IMR-90 (cell line): ENCODE measurements at regions of chr4 and their contacts with region 1.

Region 1: GRCh38 chr4:147096667-147097604 is 151.3 kb upstream of the TTC29 start:
- DNase-seq: peak; percentile 69
- ATAC-seq: peak; percentile 79
- H3K4me3 ChIP-seq: no peak overlapping the region
- H3K27ac ChIP-seq: no peak overlapping the region
- H3K4me1 ChIP-seq: peaks cover 5% of the 10 kb centered on the region
- H3K27me3 ChIP-seq: no peaks in the 10 kb centered on the region
- CTCF ChIP-seq: peak; percentile 74
- POLR2A ChIP-seq: no peak
- RAD21 ChIP-seq: peak; percentile 75

Region 2: GRCh38 chr4:146105464-146105863 is 991.5 kb before region 1 on chr4:
- CTCF ChIA-PET with region 1: no interaction called
- POLR2A ChIA-PET with region 1: no interaction called
- dilution Hi-C with region 1: no loop called
- in situ Hi-C with region 1: no loop called
- intact Hi-C with region 1: loop called (anchors 10 kb)
- DNase-seq: no peak
- ATAC-seq: no peak
- H3K4me3 ChIP-seq: no peak overlapping the region
- H3K27ac ChIP-seq: no peak overlapping the region
- H3K4me1 ChIP-seq: no peaks in the 10 kb centered on the region
- H3K27me3 ChIP-seq: peaks cover 2% of the 10 kb centered on the region; the same call in 1 of the 2 replicates
- CTCF ChIP-seq: no peak
- POLR2A ChIP-seq: no peak
- RAD21 ChIP-seq: no peak

Region 3: DNA sequence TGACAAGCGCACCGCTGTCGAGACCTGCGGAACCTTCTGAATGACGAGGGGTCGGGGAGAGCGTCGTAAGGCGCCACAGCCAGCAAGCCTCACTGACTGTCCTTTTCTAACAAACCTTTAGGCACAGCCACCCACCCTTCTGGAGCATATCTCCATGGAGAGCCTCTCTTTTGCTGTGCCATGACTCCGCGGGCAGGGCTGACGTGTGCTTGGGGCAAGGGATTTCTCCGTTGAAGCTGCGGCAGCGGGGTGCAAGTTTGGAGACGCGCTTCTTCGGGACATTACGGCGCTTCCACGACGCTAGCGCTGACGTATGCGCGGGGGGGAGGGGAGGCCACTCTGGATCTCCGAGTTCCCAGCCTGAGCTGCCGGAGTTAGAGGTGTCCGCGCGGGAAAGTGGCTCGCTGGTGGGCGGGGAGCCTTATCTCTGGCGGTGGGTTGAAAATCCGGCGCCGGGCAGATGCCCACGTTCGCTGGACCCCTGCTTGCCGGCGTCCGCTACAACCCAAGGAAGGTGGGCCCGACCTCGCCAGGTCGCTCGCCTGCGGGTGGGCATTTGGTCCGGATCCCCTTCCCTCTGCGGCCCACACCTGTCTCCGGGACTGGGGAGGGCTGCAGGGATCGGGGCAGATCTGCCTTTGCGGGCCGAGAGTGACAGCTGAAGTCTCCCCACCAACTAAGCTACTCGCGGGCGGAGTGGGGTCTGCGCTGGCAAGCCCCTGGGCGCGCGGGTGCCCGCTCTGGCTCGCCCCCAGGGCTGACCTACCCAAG is 574.7 kb before region 1 on chr4:
- CTCF ChIA-PET with region 1: no interaction called
- POLR2A ChIA-PET with region 1: no interaction called
- dilution Hi-C with region 1: no loop called
- in situ Hi-C with region 1: no loop called
- intact Hi-C with region 1: loop called (anchors 10 kb)
- DNase-seq: peak; percentile 80
- ATAC-seq: peak; percentile 93
- H3K4me3 ChIP-seq: peak overlapping the region; percentile 94
- H3K27ac ChIP-seq: peak overlapping the region; percentile 68
- H3K4me1 ChIP-seq: no peaks in the 10 kb centered on the region
- H3K27me3 ChIP-seq: no peaks in the 10 kb centered on the region
- CTCF ChIP-seq: no peak
- POLR2A ChIP-seq: peak; percentile 19; the same call in 1 of the 2 replicates
- RAD21 ChIP-seq: no peak

Region 4: GRCh38 chr4:146709956-146710355 is 387.0 kb before region 1 on chr4:
- CTCF ChIA-PET with region 1: no interaction called
- POLR2A ChIA-PET with region 1: no interaction called
- dilution Hi-C with region 1: no loop called
- in situ Hi-C with region 1: no loop called
- intact Hi-C with region 1: no loop called
- DNase-seq: no peak
- ATAC-seq: no peak
- H3K4me3 ChIP-seq: no peak overlapping the region
- H3K27ac ChIP-seq: no peak overlapping the region
- H3K4me1 ChIP-seq: no peaks in the 10 kb centered on the region
- H3K27me3 ChIP-seq: no peaks in the 10 kb centered on the region
- CTCF ChIP-seq: no peak
- POLR2A ChIP-seq: no peak
- RAD21 ChIP-seq: no peak

Region 5: DNA sequence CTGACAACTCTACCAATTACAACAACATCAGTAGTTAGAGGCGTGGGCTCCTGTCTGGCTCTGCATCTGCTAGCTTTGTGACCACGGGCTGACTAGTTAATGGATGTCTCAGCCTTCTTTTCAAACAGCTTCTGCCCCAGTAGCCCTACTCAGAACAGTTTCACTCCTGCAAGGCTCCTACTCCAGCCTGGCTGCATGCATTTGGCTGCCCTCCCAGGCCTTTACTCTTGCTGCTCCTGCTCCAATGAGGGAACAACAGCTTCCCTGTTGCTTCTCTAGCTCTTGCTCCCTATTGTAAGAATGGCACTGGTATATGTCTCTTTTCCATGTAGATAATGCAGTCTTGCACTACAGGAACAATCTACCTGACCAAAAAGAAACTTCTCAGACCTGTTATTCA is 244.6 kb before region 1 on chr4:
- CTCF ChIA-PET with region 1: no interaction called
- POLR2A ChIA-PET with region 1: no interaction called
- dilution Hi-C with region 1: no loop called
- in situ Hi-C with region 1: no loop called
- intact Hi-C with region 1: no loop called
- DNase-seq: no peak
- ATAC-seq: no peak
- H3K4me3 ChIP-seq: no peak overlapping the region
- H3K27ac ChIP-seq: no peak overlapping the region
- H3K4me1 ChIP-seq: no peaks in the 10 kb centered on the region
- H3K27me3 ChIP-seq: no peaks in the 10 kb centered on the region
- CTCF ChIP-seq: no peak
- POLR2A ChIP-seq: no peak
- RAD21 ChIP-seq: no peak

Region 6: GRCh38 chr4:146916479-146917076 is 180.4 kb before region 1 on chr4:
- CTCF ChIA-PET with region 1: no interaction called
- POLR2A ChIA-PET with region 1: no interaction called
- dilution Hi-C with region 1: no loop called
- in situ Hi-C with region 1: no loop called
- intact Hi-C with region 1: loop called (anchors 2 kb)
- DNase-seq: peak; percentile 47
- ATAC-seq: peak; percentile 60
- H3K4me3 ChIP-seq: no peak overlapping the region
- H3K27ac ChIP-seq: no peak overlapping the region
- H3K4me1 ChIP-seq: no peaks in the 10 kb centered on the region
- H3K27me3 ChIP-seq: peaks cover 4% of the 10 kb centered on the region
- CTCF ChIP-seq: peak; percentile 82
- POLR2A ChIP-seq: no peak
- RAD21 ChIP-seq: peak; percentile 83

Region 7: GRCh38 chr4:147056940-147057610 is 39.9 kb before region 1 on chr4:
- CTCF ChIA-PET with region 1: no interaction called
- POLR2A ChIA-PET with region 1: no interaction called
- dilution Hi-C with region 1: no loop called
- in situ Hi-C with region 1: no loop called
- intact Hi-C with region 1: loop called (anchors 2 kb)
- DNase-seq: peak; percentile 14
- ATAC-seq: peak; percentile 70
- H3K4me3 ChIP-seq: peak overlapping the region; percentile 48
- H3K27ac ChIP-seq: peak overlapping the region; percentile 54; the same call in 1 of the 2 replicates
- H3K4me1 ChIP-seq: peaks cover 9% of the 10 kb centered on the region
- H3K27me3 ChIP-seq: no peaks in the 10 kb centered on the region
- CTCF ChIP-seq: peak; percentile 13; the same call in 1 of the 2 replicates
- POLR2A ChIP-seq: no peak
- RAD21 ChIP-seq: no peak